Naive thymus-derived CD4-positive, alpha-beta T cell (primary cell): ENCODE measurements at regions of chr1 and their contacts with region 1.

Region 1: DNA sequence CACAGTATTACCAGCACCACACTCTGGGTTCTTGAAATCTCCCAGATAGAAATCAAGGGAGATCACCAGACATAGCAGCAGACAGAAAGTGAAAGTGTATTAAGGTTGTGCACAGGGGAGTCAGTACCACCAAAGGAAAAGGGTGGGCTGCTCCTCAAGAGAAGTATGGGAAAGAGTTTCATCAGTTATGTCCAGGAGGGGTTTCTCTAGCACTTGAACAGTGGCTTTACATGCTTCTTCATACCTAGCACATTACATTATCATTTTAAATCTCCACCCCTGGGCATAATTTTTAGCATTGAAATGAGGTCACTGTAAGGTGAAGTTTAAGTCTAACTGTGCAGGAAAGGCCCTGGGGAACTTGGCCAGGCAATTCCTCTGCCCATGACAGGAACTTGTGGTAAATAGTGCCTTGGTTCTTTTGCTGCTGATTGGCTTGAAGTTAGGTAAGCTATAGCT is 601.0 kb downstream of the NUF2 start:
- DNase-seq: no peak
- ATAC-seq: peak; percentile 10
- H3K4me3 ChIP-seq: no peak overlapping the region
- H3K4me3 Mint-ChIP-seq: no peak overlapping the region
- H3K27ac ChIP-seq: no peak overlapping the region
- H3K27ac Mint-ChIP-seq: no peak overlapping the region
- H3K4me1 ChIP-seq: no peaks in the 10 kb centered on the region
- H3K4me1 Mint-ChIP-seq: no peaks in the 10 kb centered on the region
- H3K27me3 ChIP-seq: no peaks in the 10 kb centered on the region
- H3K27me3 Mint-ChIP-seq: no peaks in the 10 kb centered on the region

Region 2: GRCh38 chr1:163174524-163175437 is 748.0 kb before region 1 on chr1:
- CTCF ChIA-PET with region 1: no interaction called
- POLR2A ChIA-PET with region 1: no interaction called
- intact Hi-C with region 1: no loop called
- DNase-seq: peak in 6 of 9 donors; percentile 3 to 34 (median 10)
- ATAC-seq: no peak
- H3K4me3 ChIP-seq: no peak overlapping the region
- H3K4me3 Mint-ChIP-seq: no peak overlapping the region
- H3K27ac ChIP-seq: no peak overlapping the region
- H3K27ac Mint-ChIP-seq: no peak overlapping the region
- H3K4me1 ChIP-seq: no peaks in the 10 kb centered on the region
- H3K4me1 Mint-ChIP-seq: no peaks in the 10 kb centered on the region
- H3K27me3 ChIP-seq: no peaks in the 10 kb centered on the region
- H3K27me3 Mint-ChIP-seq: peaks cover 0 to 13% (median 4%) of the 10 kb centered on the region in 5 donors

Region 3: GRCh38 chr1:163933437-163933836 is 10.7 kb after region 1 on chr1:
- CTCF ChIA-PET with region 1: no interaction called
- POLR2A ChIA-PET with region 1: no interaction called
- intact Hi-C with region 1: no loop called
- DNase-seq: no peak
- ATAC-seq: no peak
- H3K4me3 ChIP-seq: no peak overlapping the region
- H3K4me3 Mint-ChIP-seq: no peak overlapping the region
- H3K27ac ChIP-seq: no peak overlapping the region
- H3K27ac Mint-ChIP-seq: no peak overlapping the region
- H3K4me1 ChIP-seq: no peaks in the 10 kb centered on the region
- H3K4me1 Mint-ChIP-seq: no peaks in the 10 kb centered on the region
- H3K27me3 ChIP-seq: no peaks in the 10 kb centered on the region
- H3K27me3 Mint-ChIP-seq: no peaks in the 10 kb centered on the region

Region 4: DNA sequence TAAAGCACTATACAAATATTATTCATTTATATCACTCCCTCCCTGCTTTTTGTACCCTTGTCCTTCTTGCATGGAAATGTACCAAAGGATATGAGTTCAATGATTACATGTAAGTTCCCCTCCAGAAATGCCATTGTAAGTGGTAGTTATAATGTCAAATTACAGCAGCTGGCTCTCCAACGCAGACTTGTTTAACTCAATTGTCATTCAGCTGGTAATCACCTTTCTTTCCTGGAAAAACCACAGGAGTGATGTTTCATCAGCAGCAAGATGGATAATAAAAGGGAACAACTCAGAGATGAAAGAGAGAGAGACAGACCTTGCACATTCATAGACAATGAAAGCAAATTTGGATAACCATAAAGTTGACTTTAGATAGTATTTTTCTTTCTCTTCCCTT is 57.6 kb after region 1 on chr1:
- CTCF ChIA-PET with region 1: no interaction called
- POLR2A ChIA-PET with region 1: no interaction called
- intact Hi-C with region 1: loop called in 1 of 2 experiments (anchors 10 kb)
- DNase-seq: no peak
- ATAC-seq: no peak
- H3K4me3 ChIP-seq: no peak overlapping the region
- H3K4me3 Mint-ChIP-seq: no peak overlapping the region
- H3K27ac ChIP-seq: no peak overlapping the region
- H3K27ac Mint-ChIP-seq: no peak overlapping the region
- H3K4me1 ChIP-seq: no peaks in the 10 kb centered on the region
- H3K4me1 Mint-ChIP-seq: no peaks in the 10 kb centered on the region
- H3K27me3 ChIP-seq: no peaks in the 10 kb centered on the region
- H3K27me3 Mint-ChIP-seq: no peaks in the 10 kb centered on the region

Region 5: DNA sequence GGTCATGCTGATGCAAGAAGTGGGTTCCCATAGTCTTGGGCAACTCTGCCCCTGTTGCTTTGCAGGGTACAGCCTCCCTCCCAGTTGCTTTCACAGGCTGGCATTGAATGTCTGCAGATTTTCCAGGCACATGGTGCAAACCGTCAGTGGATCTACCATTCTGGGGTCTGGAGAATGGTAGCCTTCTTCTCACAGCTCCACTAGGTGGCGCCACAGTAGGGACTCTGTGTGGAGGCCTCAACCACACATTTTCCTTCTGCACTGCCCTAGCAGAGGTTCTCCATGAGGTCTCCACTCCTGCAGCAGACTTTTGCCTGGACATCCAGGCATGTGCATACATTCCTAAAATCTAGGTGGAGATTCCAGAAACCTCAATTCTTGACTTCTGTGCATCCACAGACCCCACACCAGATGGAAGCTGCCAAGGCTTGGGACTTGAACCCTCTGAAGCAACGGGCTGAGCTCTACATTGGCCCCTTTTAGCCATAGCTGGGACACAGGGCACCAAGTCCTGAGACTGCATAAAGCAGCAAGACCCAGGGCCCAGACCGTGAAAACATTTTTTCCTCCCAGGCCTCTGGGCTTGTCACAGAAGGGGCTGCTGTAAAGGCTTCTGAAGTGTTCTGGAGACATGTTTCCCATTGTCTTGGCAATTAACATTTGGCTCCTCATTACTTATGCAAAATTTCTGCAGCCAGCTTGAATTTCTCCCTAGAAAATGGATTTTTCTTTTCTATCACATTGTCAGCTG is 170.0 kb after region 1 on chr1:
- CTCF ChIA-PET with region 1: no interaction called
- POLR2A ChIA-PET with region 1: no interaction called
- intact Hi-C with region 1: no loop called
- DNase-seq: no peak
- ATAC-seq: no peak
- H3K4me3 ChIP-seq: no peak overlapping the region
- H3K4me3 Mint-ChIP-seq: no peak overlapping the region
- H3K27ac ChIP-seq: no peak overlapping the region
- H3K27ac Mint-ChIP-seq: no peak overlapping the region
- H3K4me1 ChIP-seq: no peaks in the 10 kb centered on the region
- H3K4me1 Mint-ChIP-seq: no peaks in the 10 kb centered on the region
- H3K27me3 ChIP-seq: no peaks in the 10 kb centered on the region
- H3K27me3 Mint-ChIP-seq: no peaks in the 10 kb centered on the region